T-cell (primary cell): ENCODE measurements at regions of chr9 and their contacts with region 1.

Region 1: DNA sequence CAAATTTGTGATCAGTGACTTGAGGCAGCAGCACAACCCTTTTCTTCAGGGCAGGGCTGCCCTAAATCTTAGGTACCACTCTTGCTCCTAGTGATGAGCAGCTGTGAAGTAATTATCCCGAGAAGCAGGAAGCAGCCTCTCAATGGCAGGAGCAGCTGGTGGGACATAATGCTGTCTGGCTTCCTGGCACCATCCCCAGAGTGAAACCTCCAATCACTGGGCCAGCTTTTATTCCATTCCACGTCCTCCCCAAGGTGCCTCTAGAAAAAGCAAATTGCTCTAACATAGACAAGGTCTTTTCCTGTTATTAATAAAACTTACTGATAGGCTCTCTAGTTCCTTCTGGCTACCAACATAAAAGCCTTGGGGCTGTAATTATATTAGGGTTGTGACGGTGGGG is 154.0 kb downstream of the FRMD3 start:
- DNase-seq: no peak
- ATAC-seq: no peak
- H3K4me3 ChIP-seq: no peak overlapping the region
- H3K4me3 Mint-ChIP-seq: no peak overlapping the region
- H3K27ac ChIP-seq: no peak overlapping the region
- H3K27ac Mint-ChIP-seq: no peak overlapping the region
- H3K4me1 ChIP-seq: no peaks in the 10 kb centered on the region
- H3K4me1 Mint-ChIP-seq: no peaks in the 10 kb centered on the region
- H3K27me3 ChIP-seq: no peaks in the 10 kb centered on the region
- H3K27me3 Mint-ChIP-seq: no peaks in the 10 kb centered on the region

Region 2: GRCh38 chr9:83062656-83063527 is 321.3 kb before region 1 on chr9 and contains the start of gene RASEF:
- CTCF ChIA-PET with region 1: no interaction called
- POLR2A ChIA-PET with region 1: no interaction called
- DNase-seq: no peak
- ATAC-seq: no peak
- H3K4me3 ChIP-seq: no peak within 1 kb of the TSS
- H3K4me3 Mint-ChIP-seq: no peak within 1 kb of the TSS
- H3K27ac ChIP-seq: no peak within 1 kb of the TSS
- H3K27ac Mint-ChIP-seq: no peak within 1 kb of the TSS
- H3K4me1 ChIP-seq: no peaks in the 10 kb centered on the region
- H3K4me1 Mint-ChIP-seq: no peaks in the 10 kb centered on the region
- H3K27me3 ChIP-seq: peaks cover 6 to 11% of the 10 kb centered on the region in 2 experiments
- H3K27me3 Mint-ChIP-seq: peaks cover 38 to 40% of the 10 kb centered on the region in 2 donors
- total RNA-seq, gene RASEF: 0.09 to 0.16 TPM in 2 of 5 donors, not detected in the others

Region 3: DNA sequence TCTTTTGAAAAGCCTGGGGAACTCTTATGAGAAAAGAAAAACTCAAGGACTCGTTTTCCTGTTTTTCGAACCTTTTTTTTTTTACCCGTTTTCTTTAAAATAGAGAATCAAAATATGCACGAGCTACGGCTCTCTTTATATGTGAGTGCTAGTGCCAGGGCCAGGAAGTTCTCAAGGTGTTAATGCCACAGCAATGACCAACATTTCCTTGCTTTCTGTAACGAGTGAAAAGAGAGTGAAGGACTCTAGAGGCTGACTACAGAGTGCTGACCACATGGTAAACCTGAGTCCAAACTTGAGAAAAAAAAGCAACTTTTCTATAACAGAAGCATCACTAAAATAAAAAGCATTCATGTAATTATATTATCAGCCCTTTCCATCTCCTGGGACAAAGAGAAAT is 1058.5 kb after region 1 on chr9:
- CTCF ChIA-PET with region 1: interaction called in 1 of 2 experiments, 10 read pairs
- POLR2A ChIA-PET with region 1: no interaction called
- DNase-seq: no peak
- ATAC-seq: no peak
- H3K4me3 ChIP-seq: no peak overlapping the region
- H3K4me3 Mint-ChIP-seq: no peak overlapping the region
- H3K27ac ChIP-seq: no peak overlapping the region
- H3K27ac Mint-ChIP-seq: no peak overlapping the region
- H3K4me1 ChIP-seq: no peaks in the 10 kb centered on the region
- H3K4me1 Mint-ChIP-seq: no peaks in the 10 kb centered on the region
- H3K27me3 ChIP-seq: no peaks in the 10 kb centered on the region
- H3K27me3 Mint-ChIP-seq: peaks cover 3 to 4% of the 10 kb centered on the region in 2 donors